ENCODE measurements at regions of chr20 and their contacts with region 1.

Region 1: GRCh38 chr20:36493013-36493800 is 48.1 kb upstream of the MYL9 start:
- DNase-seq: peak; percentile 71
- H3K4me3 Mint-ChIP-seq: no peak overlapping the region
- H3K27ac Mint-ChIP-seq: no peak overlapping the region
- H3K4me1 Mint-ChIP-seq: peaks cover 28% of the 10 kb centered on the region
- H3K27me3 Mint-ChIP-seq: no peaks in the 10 kb centered on the region

Region 2: GRCh38 chr20:36384022-36384619 is 109.1 kb before region 1 on chr20:
- CTCF ChIA-PET with region 1: no interaction called
- intact Hi-C with region 1: loop called (anchors 5 kb)
- DNase-seq: peak; percentile 72
- H3K4me3 Mint-ChIP-seq: no peak overlapping the region
- H3K27ac Mint-ChIP-seq: no peak overlapping the region
- H3K4me1 Mint-ChIP-seq: no peaks in the 10 kb centered on the region
- H3K27me3 Mint-ChIP-seq: peaks cover 3% of the 10 kb centered on the region

Region 3: GRCh38 chr20:36467076-36467999 is 25.9 kb before region 1 on chr20:
- CTCF ChIA-PET with region 1: interaction called, 4 read pairs
- intact Hi-C with region 1: loop called (anchors 1 kb)
- DNase-seq: peak; percentile 79
- H3K4me3 Mint-ChIP-seq: no peak overlapping the region
- H3K27ac Mint-ChIP-seq: peak overlapping the region; percentile 20
- H3K4me1 Mint-ChIP-seq: peaks cover 78% of the 10 kb centered on the region
- H3K27me3 Mint-ChIP-seq: no peaks in the 10 kb centered on the region

Measured in activated naive CD4-positive, alpha-beta T cell treated with anti-CD3 and anti-CD28 coated beads for 36 hours (primary cell).